Activated B cell treated with CpG ODN at 0.5 μM for 24 hours (primary cell): ENCODE measurements at regions of chrX and their contacts with region 1.

Region 1: GRCh38 chrX:81174286-81174685 is 27.4 kb downstream of the HMGN5 start:
- DNase-seq: no peak
- ATAC-seq: no peak
- H3K4me3 Mint-ChIP-seq: no peak overlapping the region
- H3K27ac Mint-ChIP-seq: no peak overlapping the region
- H3K4me1 Mint-ChIP-seq: no peaks in the 10 kb centered on the region
- H3K27me3 Mint-ChIP-seq: no peaks in the 10 kb centered on the region
- CTCF ChIP-seq: no peak

Region 2: DNA sequence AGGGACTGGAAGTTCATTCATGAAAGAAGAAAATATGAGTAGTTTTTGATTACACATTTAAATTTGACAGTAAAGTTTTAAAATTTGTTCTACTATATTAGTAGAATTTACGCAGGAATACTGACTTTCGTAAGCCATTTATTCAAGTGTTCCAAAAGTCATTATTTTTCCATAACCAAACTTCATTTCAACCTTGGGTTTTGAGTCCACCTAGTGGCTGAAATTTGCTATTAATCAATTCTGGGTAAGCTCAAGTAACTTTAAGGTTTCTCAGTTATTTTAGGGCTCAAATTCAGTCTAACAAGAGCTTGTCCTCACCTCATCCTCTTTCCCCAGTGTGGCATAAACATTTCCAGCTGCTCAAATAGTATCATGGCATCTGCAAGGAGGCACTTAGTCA is 203.0 kb after region 1 on chrX:
- CTCF ChIA-PET with region 1: interaction called, 6 read pairs
- POLR2A ChIA-PET with region 1: no interaction called
- intact Hi-C with region 1: loop called (anchors 1 kb)
- DNase-seq: no peak
- ATAC-seq: no peak
- H3K4me3 Mint-ChIP-seq: no peak overlapping the region
- H3K27ac Mint-ChIP-seq: no peak overlapping the region
- H3K4me1 Mint-ChIP-seq: no peaks in the 10 kb centered on the region
- H3K27me3 Mint-ChIP-seq: peaks cover 2% of the 10 kb centered on the region
- CTCF ChIP-seq: no peak

Region 3: DNA sequence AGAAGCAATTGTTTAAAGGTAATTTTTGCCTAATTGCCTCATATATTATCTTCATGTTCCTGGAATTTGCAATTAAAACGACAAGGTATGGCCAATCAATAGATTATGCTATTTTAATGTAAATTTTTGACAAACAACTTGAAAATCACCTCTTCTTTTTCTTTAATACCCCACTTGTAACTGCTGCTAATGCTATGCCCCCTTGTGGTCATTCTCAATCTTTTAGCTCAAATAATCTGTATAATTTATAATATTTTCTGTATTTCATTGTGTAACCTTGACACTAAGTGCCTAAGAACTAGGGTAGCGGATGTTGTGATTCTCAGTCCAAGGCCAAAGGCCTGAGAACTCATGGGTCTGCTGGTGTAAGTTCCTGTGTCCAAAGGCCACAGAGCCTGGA is 1502.1 kb after region 1 on chrX:
- CTCF ChIA-PET with region 1: no interaction called
- POLR2A ChIA-PET with region 1: no interaction called
- intact Hi-C with region 1: loop called (anchors 5 kb)
- DNase-seq: no peak
- ATAC-seq: no peak
- H3K4me3 Mint-ChIP-seq: no peak overlapping the region
- H3K27ac Mint-ChIP-seq: no peak overlapping the region
- H3K4me1 Mint-ChIP-seq: no peaks in the 10 kb centered on the region
- H3K27me3 Mint-ChIP-seq: no peaks in the 10 kb centered on the region
- CTCF ChIP-seq: no peak